Activated T-helper 1 cell treated with anti-CD3 and anti-CD28 coated beads, Interleukin-12 subunit alpha, Interleukin-12 subunit beta, Interleukin-2, Interleukin-4 antibody, amounts not matched to agents 30 ng/mL and 10 ng/mL and 1 ng/mL, durations not matched to agents 14 hours and 24 hours and 36 hours (primary cell): ENCODE measurements at regions of chr3 and their contacts with region 1.

Region 1: GRCh38 chr3:141498598-141499223 is 11.9 kb downstream of the RASA2 start:
- DNase-seq: peak; percentile 89
- H3K4me3 Mint-ChIP-seq: peak overlapping the region; percentile 54
- H3K27ac Mint-ChIP-seq: peak overlapping the region; percentile 83
- H3K4me1 Mint-ChIP-seq: peaks cover 66% of the 10 kb centered on the region
- H3K27me3 Mint-ChIP-seq: no peaks in the 10 kb centered on the region

Region 2: DNA sequence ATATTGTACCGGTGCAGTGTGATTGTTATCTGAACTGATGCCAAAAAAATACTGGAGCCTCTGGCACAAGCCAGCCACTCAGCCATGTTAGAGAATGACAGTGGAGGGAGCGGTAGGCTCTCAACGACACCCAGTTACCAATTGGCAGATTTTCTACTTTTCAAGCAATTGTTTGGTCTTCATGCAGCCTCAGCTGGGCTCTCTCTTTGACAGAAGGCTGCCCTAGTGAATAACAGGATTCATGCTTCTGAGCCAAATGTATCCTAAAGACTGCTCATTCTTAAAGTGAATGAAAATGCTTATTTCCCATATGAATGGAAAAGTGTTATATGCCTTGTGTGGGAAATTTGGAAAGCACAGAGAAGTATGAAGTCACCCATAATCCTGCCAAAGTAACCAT is 1082.0 kb before region 1 on chr3:
- intact Hi-C with region 1: no loop called
- DNase-seq: no peak
- H3K4me3 Mint-ChIP-seq: no peak overlapping the region
- H3K27ac Mint-ChIP-seq: no peak overlapping the region
- H3K4me1 Mint-ChIP-seq: no peaks in the 10 kb centered on the region
- H3K27me3 Mint-ChIP-seq: peaks cover 2% of the 10 kb centered on the region

Region 3: DNA sequence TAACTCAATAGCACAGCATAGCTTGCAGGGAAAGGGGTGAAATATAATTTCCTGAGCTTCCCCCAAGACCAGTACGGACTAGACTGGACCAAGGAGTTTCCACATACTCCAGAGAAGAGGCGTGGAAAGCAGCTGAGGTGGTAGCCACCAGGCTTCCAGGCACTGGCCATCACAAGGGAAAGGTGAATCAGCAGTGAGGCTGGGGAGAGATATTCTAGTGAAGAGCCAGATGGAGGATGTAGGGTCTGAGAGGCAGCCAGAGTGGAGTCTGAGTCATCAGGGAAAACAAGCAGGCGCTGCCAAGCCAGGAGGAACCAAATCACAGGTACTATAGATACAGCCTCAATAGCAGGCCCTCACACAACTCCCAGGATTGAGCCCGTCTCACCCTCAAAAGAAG is 21.5 kb before region 1 on chr3:
- intact Hi-C with region 1: loop called (anchors 1 kb)
- DNase-seq: no peak
- H3K4me3 Mint-ChIP-seq: no peak overlapping the region
- H3K27ac Mint-ChIP-seq: no peak overlapping the region
- H3K4me1 Mint-ChIP-seq: peaks cover 43% of the 10 kb centered on the region
- H3K27me3 Mint-ChIP-seq: peaks cover 17% of the 10 kb centered on the region

Region 4: GRCh38 chr3:141544697-141545096 is 46.0 kb after region 1 on chr3:
- intact Hi-C with region 1: loop called (anchors 1 kb)
- DNase-seq: peak; percentile 6
- H3K4me3 Mint-ChIP-seq: peak overlapping the region; percentile 67
- H3K27ac Mint-ChIP-seq: peak overlapping the region; percentile 81
- H3K4me1 Mint-ChIP-seq: peaks cover 60% of the 10 kb centered on the region
- H3K27me3 Mint-ChIP-seq: no peaks in the 10 kb centered on the region

Region 5: GRCh38 chr3:141553055-141553454 is 54.3 kb after region 1 on chr3:
- intact Hi-C with region 1: loop called (anchors 1 kb)
- DNase-seq: peak; percentile 35
- H3K4me3 Mint-ChIP-seq: peak overlapping the region; percentile 38
- H3K27ac Mint-ChIP-seq: peak overlapping the region; percentile 93
- H3K4me1 Mint-ChIP-seq: peaks cover 52% of the 10 kb centered on the region
- H3K27me3 Mint-ChIP-seq: no peaks in the 10 kb centered on the region